CD8-positive, alpha-beta T cell (primary cell): ENCODE measurements at regions of chr19 and their contacts with region 1.

Region 1: GRCh38 chr19:3108775-3109174 is 14.6 kb downstream of the GNA11 start:
- DNase-seq: peak; percentile 37 to 82 (median 75)
- ATAC-seq: peak; percentile 65
- H3K4me3 ChIP-seq: no peak overlapping the region
- H3K4me3 Mint-ChIP-seq: no peak overlapping the region
- H3K27ac ChIP-seq: no peak overlapping the region
- H3K27ac Mint-ChIP-seq: no peak overlapping the region
- H3K4me1 ChIP-seq: peaks cover 4% of the 10 kb centered on the region
- H3K4me1 Mint-ChIP-seq: peaks cover 8% of the 10 kb centered on the region
- H3K27me3 ChIP-seq: no peaks in the 10 kb centered on the region
- H3K27me3 Mint-ChIP-seq: peaks cover 2% of the 10 kb centered on the region
- CTCF ChIP-seq: peak; percentile 82

Region 2: GRCh38 chr19:2648528-2648937 is 460.2 kb before region 1 on chr19:
- CTCF ChIA-PET with region 1: no interaction called
- POLR2A ChIA-PET with region 1: no interaction called
- intact Hi-C with region 1: loop called in 1 of 2 experiments (anchors 10 kb)
- DNase-seq: peak; percentile 53 to 84 (median 76)
- ATAC-seq: peak; percentile 99
- H3K4me3 ChIP-seq: no peak overlapping the region
- H3K4me3 Mint-ChIP-seq: no peak overlapping the region
- H3K27ac ChIP-seq: no peak overlapping the region
- H3K27ac Mint-ChIP-seq: no peak overlapping the region
- H3K4me1 ChIP-seq: no peaks in the 10 kb centered on the region
- H3K4me1 Mint-ChIP-seq: peaks cover 2% of the 10 kb centered on the region
- H3K27me3 ChIP-seq: no peaks in the 10 kb centered on the region
- H3K27me3 Mint-ChIP-seq: no peaks in the 10 kb centered on the region
- CTCF ChIP-seq: peak; percentile 97

Region 3: GRCh38 chr19:2962045-2962561 is 146.7 kb before region 1 on chr19:
- CTCF ChIA-PET with region 1: interaction called, 117 read pairs
- POLR2A ChIA-PET with region 1: no interaction called
- intact Hi-C with region 1: loop called (anchors 1 kb)
- DNase-seq: peak in 8 of 9 experiments; percentile 19 to 91 (median 54)
- ATAC-seq: peak; percentile 98
- H3K4me3 ChIP-seq: no peak overlapping the region
- H3K4me3 Mint-ChIP-seq: no peak overlapping the region
- H3K27ac ChIP-seq: no peak overlapping the region
- H3K27ac Mint-ChIP-seq: no peak overlapping the region
- H3K4me1 ChIP-seq: no peaks in the 10 kb centered on the region
- H3K4me1 Mint-ChIP-seq: peaks cover 4% of the 10 kb centered on the region
- H3K27me3 ChIP-seq: no peaks in the 10 kb centered on the region
- H3K27me3 Mint-ChIP-seq: no peaks in the 10 kb centered on the region
- CTCF ChIP-seq: peak; percentile 78

Region 4: GRCh38 chr19:3075895-3076431 is 32.8 kb before region 1 on chr19:
- CTCF ChIA-PET with region 1: interaction called, 229 read pairs
- POLR2A ChIA-PET with region 1: interaction called, 3 read pairs
- intact Hi-C with region 1: loop called (anchors 1 kb)
- DNase-seq: peak; percentile 58 to 89 (median 79)
- ATAC-seq: peak; percentile 100
- H3K4me3 ChIP-seq: no peak overlapping the region
- H3K4me3 Mint-ChIP-seq: no peak overlapping the region
- H3K27ac ChIP-seq: no peak overlapping the region
- H3K27ac Mint-ChIP-seq: no peak overlapping the region
- H3K4me1 ChIP-seq: peaks cover 10% of the 10 kb centered on the region
- H3K4me1 Mint-ChIP-seq: peaks cover 2% of the 10 kb centered on the region
- H3K27me3 ChIP-seq: no peaks in the 10 kb centered on the region
- H3K27me3 Mint-ChIP-seq: no peaks in the 10 kb centered on the region
- CTCF ChIP-seq: peak; percentile 85

Region 5: GRCh38 chr19:3094601-3095437 is 14.0 kb before region 1 on chr19:
- CTCF ChIA-PET with region 1: interaction called, 29 read pairs
- POLR2A ChIA-PET with region 1: no interaction called
- intact Hi-C with region 1: no loop called
- DNase-seq: peak in 4 of 9 experiments; percentile 43 to 59 (median 58)
- ATAC-seq: peak; percentile 6
- H3K4me3 ChIP-seq: peak overlapping the region; percentile 34 to 62
- H3K4me3 Mint-ChIP-seq: peak overlapping the region; percentile 77
- H3K27ac ChIP-seq: no peak overlapping the region
- H3K27ac Mint-ChIP-seq: peak overlapping the region; percentile 60
- H3K4me1 ChIP-seq: peaks cover 42% of the 10 kb centered on the region
- H3K4me1 Mint-ChIP-seq: peaks cover 24% of the 10 kb centered on the region
- H3K27me3 ChIP-seq: peaks cover 0 to 20% of the 10 kb centered on the region in 2 experiments
- H3K27me3 Mint-ChIP-seq: peaks cover 6% of the 10 kb centered on the region
- CTCF ChIP-seq: no peak

Region 6: DNA sequence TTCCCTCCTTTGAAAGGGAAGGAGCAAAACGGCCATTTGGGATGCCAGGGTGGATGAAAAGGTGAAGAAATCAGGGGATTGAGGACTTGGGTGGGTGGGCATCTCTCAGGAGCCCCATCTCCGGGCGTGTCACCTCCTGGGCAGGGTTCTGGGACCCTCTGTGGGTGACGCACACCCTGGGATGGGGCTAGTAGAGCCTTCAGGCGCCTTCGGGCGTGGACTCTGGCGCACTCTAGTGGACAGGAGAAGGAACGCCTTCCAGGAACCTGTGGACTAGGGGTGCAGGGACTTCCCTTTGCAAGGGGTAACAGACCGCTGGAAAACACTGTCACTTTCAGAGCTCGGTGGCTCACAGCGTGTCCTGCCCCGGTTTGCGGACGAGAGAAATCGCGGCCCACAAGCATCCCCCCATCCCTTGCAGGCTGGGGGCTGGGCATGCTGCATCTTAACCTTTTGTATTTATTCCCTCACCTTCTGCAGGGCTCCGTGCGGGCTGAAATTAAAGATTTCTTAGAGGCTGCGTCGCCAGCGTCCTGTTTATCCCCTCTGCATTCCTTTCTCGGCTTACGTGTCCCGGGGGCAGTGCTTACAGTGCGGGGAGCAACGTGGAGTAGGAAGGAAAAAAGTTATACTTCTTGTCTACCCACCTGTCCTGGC is 54.6 kb after region 1 on chr19:
- CTCF ChIA-PET with region 1: interaction called, 9 read pairs
- POLR2A ChIA-PET with region 1: no interaction called
- intact Hi-C with region 1: loop called in 1 of 2 experiments (anchors 2 kb)
- DNase-seq: peak; percentile 46 to 85 (median 75)
- ATAC-seq: peak; percentile 97
- H3K4me3 ChIP-seq: no peak overlapping the region
- H3K4me3 Mint-ChIP-seq: no peak overlapping the region
- H3K27ac ChIP-seq: no peak overlapping the region
- H3K27ac Mint-ChIP-seq: peak overlapping the region; percentile 14
- H3K4me1 ChIP-seq: no peaks in the 10 kb centered on the region
- H3K4me1 Mint-ChIP-seq: peaks cover 14% of the 10 kb centered on the region
- H3K27me3 ChIP-seq: no peaks in the 10 kb centered on the region
- H3K27me3 Mint-ChIP-seq: no peaks in the 10 kb centered on the region
- CTCF ChIP-seq: peak; percentile 89

Region 7: GRCh38 chr19:3423183-3423829 is 314.5 kb after region 1 on chr19:
- CTCF ChIA-PET with region 1: no interaction called
- POLR2A ChIA-PET with region 1: no interaction called
- intact Hi-C with region 1: no loop called
- DNase-seq: no peak
- ATAC-seq: no peak
- H3K4me3 ChIP-seq: no peak overlapping the region
- H3K4me3 Mint-ChIP-seq: no peak overlapping the region
- H3K27ac ChIP-seq: no peak overlapping the region
- H3K27ac Mint-ChIP-seq: no peak overlapping the region
- H3K4me1 ChIP-seq: no peaks in the 10 kb centered on the region
- H3K4me1 Mint-ChIP-seq: peaks cover 2% of the 10 kb centered on the region
- H3K27me3 ChIP-seq: no peaks in the 10 kb centered on the region
- H3K27me3 Mint-ChIP-seq: no peaks in the 10 kb centered on the region
- CTCF ChIP-seq: no peak